Sigmoid colon (tissue), 7 donors: ENCODE measurements at regions of chr5 and their contacts with region 1.

Region 1: DNA sequence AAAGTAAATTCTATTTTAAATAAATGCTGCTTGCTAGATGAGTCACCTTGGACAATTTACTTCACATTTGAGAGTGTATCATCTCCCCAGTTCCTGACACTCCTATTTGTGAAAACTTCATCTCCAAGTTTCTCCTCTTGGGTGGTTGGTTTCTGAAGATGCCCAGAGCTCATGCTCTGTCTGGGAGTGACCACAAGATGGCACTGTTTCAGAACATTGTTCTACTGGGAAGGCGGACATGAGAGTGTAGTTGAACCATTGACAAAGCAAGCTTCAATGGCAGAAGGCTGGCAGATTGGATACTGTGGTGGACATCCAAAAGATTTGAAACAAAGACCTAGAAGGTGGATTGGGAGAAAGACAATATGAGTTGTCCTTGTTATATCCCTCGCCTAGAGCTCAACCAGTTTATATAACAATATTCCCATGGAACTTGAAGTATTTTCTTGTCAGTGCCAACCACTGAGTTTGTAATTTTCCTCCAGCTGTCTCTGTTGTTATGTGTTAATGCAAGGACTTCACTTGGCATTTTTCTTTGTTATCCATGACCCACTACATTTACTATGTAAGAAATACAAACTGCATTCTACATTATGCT is 234.3 kb upstream of the ANKH start:
- DNase-seq: no peak
- H3K4me3 ChIP-seq: no peak overlapping the region
- H3K27ac ChIP-seq: no peak overlapping the region
- H3K4me1 ChIP-seq: no peaks in the 10 kb centered on the region
- H3K27me3 ChIP-seq: no peaks in the 10 kb centered on the region
- CTCF ChIP-seq: peak; percentile 42 to 74 (median 63)
- EP300 ChIP-seq: no peak
- POLR2A ChIP-seq: no peak

Region 2: DNA sequence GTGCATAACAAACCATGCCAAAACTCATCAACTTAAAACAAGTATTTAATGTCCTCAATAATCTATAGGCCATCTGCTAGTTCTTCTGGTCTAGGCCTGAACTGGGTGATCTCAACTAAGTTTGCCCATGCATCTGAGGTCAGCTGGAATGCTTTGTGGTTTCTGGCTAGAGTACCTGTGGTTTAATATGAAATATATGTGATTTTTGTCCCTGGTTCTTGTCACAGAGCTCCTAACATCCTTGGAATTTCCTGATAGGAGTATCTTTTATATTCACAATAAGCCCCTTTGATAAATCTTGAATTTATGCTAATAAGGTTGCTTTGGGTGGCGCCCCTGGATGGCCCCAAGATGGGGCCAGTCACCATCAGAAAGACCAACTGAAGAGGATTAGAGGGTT is 1697.3 kb before region 1 on chr5:
- intact Hi-C with region 1: no loop called
- DNase-seq: no peak
- H3K4me3 ChIP-seq: no peak overlapping the region
- H3K27ac ChIP-seq: no peak overlapping the region
- H3K4me1 ChIP-seq: no peaks in the 10 kb centered on the region
- H3K27me3 ChIP-seq: no peaks in the 10 kb centered on the region
- CTCF ChIP-seq: no peak
- EP300 ChIP-seq: no peak
- POLR2A ChIP-seq: no peak

Region 3: DNA sequence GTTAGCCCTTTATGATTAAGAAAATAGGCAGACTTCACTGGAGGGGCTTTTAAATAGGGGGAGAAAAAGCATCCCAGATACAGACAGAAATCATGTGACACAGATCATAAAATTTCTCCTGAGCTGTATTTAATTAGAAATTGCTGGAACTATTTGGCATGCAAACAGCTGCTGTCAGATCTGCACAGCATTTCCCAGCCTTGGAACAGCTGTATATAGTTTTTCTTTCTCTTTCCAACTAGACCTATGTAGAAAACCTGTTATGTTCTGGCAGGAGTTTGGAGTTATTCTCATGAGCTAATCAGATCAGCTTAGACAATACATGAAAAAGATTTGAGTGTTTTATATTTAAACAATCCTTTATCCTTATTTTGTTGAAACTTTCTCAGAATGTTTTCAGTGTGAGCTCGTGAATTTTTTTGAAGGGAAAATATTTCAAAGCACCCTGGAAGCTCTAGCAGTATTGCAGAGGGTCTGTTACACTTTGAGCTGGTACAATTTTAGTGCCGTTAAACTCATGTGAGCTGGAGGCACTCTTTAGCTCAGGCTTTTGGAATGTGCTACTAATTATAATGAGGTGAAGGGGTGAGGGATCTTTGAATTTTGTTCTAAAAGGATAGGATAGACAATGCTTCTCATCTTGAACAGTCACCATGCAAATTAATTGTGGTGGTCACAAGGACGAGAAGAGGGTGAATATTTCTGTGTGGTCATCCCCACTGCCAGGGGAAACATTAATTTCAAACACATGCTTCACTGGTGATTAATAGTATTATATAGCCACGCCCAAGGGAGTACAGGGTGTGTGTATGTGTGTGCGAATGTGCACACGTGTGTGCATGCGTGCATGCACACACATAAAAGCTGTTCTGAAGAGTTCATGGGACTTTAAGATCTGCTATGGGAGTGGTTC is 154.7 kb after region 1 on chr5:
- intact Hi-C with region 1: loop called (anchors 10 kb)
- DNase-seq: no peak
- H3K4me3 ChIP-seq: peak overlapping the region in 1 of 4 donors; percentile 17
- H3K27ac ChIP-seq: peak overlapping the region in 3 of 4 donors; percentile 70 to 77 (median 75)
- H3K4me1 ChIP-seq: peaks cover 0 to 29% (median 25%) of the 10 kb centered on the region in 4 donors
- H3K27me3 ChIP-seq: no peaks in the 10 kb centered on the region
- CTCF ChIP-seq: no peak
- EP300 ChIP-seq: peak in 1 of 4 donors; percentile 19
- POLR2A ChIP-seq: no peak

Region 4: GRCh38 chr5:15821506-15821905 is 715.6 kb after region 1 on chr5:
- intact Hi-C with region 1: loop called (anchors 5 kb)
- DNase-seq: no peak
- H3K4me3 ChIP-seq: no peak overlapping the region
- H3K27ac ChIP-seq: no peak overlapping the region
- H3K4me1 ChIP-seq: peaks cover 0 to 7% (median 0%) of the 10 kb centered on the region in 4 donors
- H3K27me3 ChIP-seq: no peaks in the 10 kb centered on the region
- CTCF ChIP-seq: no peak
- EP300 ChIP-seq: no peak
- POLR2A ChIP-seq: no peak

Region 5: GRCh38 chr5:16456103-16456832 is 1350.4 kb after region 1 on chr5:
- intact Hi-C with region 1: loop called (anchors 10 kb)
- DNase-seq: no peak
- H3K4me3 ChIP-seq: no peak overlapping the region
- H3K27ac ChIP-seq: peak overlapping the region in 1 of 4 donors; percentile 38
- H3K4me1 ChIP-seq: peaks cover 0 to 22% (median 7%) of the 10 kb centered on the region in 4 donors
- H3K27me3 ChIP-seq: no peaks in the 10 kb centered on the region
- CTCF ChIP-seq: peak in 3 of 4 experiments; percentile 26 to 60 (median 37)
- EP300 ChIP-seq: no peak
- POLR2A ChIP-seq: no peak